ENCODE measurements at regions of chr9 and their contacts with region 1.

Region 1: GRCh38 chr9:36450110-36450732 is 50.2 kb upstream of the RNF38 start:
- DNase-seq: no peak
- H3K4me3 ChIP-seq: no peak overlapping the region
- H3K27ac ChIP-seq: no peak overlapping the region
- H3K4me1 ChIP-seq: peaks cover 0 to 8% (median 4%) of the 10 kb centered on the region in 4 experiments; a peak in 6 of 7 replicates
- H3K27me3 ChIP-seq: no peaks in the 10 kb centered on the region
- CTCF ChIP-seq: peak in 2 of 3 experiments; percentile 42 to 61; a peak in 3 of 4 replicates
- EP300 ChIP-seq: no peak
- POLR2A ChIP-seq: no peak
- RAD21 ChIP-seq: peak; percentile 62 to 72

Region 2: DNA sequence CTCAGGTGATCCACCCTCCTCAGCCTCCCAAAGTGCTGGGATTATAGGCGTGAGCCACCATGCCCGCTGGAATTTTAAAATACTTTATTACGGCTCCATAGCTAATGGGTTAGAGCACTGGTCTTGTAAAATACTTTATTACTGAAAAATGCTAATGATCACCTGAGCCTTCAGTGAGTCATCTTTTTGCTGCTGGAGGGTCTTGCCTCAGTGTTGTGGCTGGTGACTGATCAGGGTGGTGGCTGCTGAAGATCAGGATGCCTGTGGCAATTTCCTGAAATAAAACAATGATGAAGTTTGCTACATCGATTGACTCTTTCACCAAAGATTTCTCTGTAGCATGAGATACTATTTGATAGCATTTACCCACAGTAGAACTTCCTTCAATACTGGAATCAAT is 166.0 kb before region 1 on chr9:
- CTCF ChIA-PET with region 1: no interaction called
- POLR2A ChIA-PET with region 1: no interaction called
- DNase-seq: no peak
- H3K4me3 ChIP-seq: no peak overlapping the region
- H3K27ac ChIP-seq: no peak overlapping the region
- H3K4me1 ChIP-seq: no peaks in the 10 kb centered on the region
- H3K27me3 ChIP-seq: no peaks in the 10 kb centered on the region
- CTCF ChIP-seq: no peak
- EP300 ChIP-seq: no peak
- POLR2A ChIP-seq: no peak
- RAD21 ChIP-seq: no peak

Region 3: GRCh38 chr9:36415822-36416515 is 34.3 kb before region 1 on chr9:
- CTCF ChIA-PET with region 1: interaction called, 42 read pairs
- POLR2A ChIA-PET with region 1: interaction called, 4 read pairs
- DNase-seq: peak; percentile 27 to 59
- H3K4me3 ChIP-seq: peak overlapping the region in 1 of 4 experiments; percentile 23; a peak in 1 of 8 replicates
- H3K27ac ChIP-seq: no peak overlapping the region
- H3K4me1 ChIP-seq: peaks cover 0 to 9% (median 4%) of the 10 kb centered on the region in 4 experiments; a peak in 3 of 7 replicates
- H3K27me3 ChIP-seq: no peaks in the 10 kb centered on the region
- CTCF ChIP-seq: peak; percentile 12 to 42 (median 37); a peak in 3 of 4 replicates
- EP300 ChIP-seq: no peak
- POLR2A ChIP-seq: peak in 1 of 2 experiments; percentile 39; a peak in 1 of 3 replicates
- RAD21 ChIP-seq: peak; percentile 25 to 36; a peak in 3 of 4 replicates

Region 4: DNA sequence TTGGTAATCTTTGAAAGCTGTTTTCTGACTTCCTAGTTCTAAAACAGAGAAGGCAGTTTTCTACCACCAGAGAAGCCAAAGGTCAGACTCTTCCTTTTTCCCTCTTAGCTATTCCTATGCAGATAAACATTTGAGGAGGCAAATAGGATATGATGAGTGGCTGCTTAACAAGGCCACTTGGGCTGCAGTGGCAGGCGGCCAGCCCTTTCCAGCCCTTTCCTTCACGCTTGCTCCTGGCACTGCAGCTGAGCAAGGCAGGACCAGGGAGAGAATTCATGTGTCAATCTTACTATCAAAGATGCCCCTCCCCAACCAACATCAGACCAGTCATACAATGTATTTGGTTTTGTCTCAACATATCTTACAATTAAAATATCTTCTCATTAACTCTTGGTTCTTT is 13.3 kb before region 1 on chr9:
- CTCF ChIA-PET with region 1: interaction called, 84 read pairs
- POLR2A ChIA-PET with region 1: interaction called, 8 read pairs
- DNase-seq: no peak
- H3K4me3 ChIP-seq: no peak overlapping the region
- H3K27ac ChIP-seq: no peak overlapping the region
- H3K4me1 ChIP-seq: peaks cover 1 to 6% (median 4%) of the 10 kb centered on the region in 4 experiments; a peak in 3 of 7 replicates
- H3K27me3 ChIP-seq: no peaks in the 10 kb centered on the region
- CTCF ChIP-seq: no peak
- EP300 ChIP-seq: no peak
- POLR2A ChIP-seq: no peak
- RAD21 ChIP-seq: no peak

Region 5: GRCh38 chr9:36461323-36461722 is 11.1 kb after region 1 on chr9:
- CTCF ChIA-PET with region 1: interaction called, 15 read pairs
- POLR2A ChIA-PET with region 1: no interaction called
- DNase-seq: no peak
- H3K4me3 ChIP-seq: no peak overlapping the region
- H3K27ac ChIP-seq: no peak overlapping the region
- H3K4me1 ChIP-seq: no peaks in the 10 kb centered on the region
- H3K27me3 ChIP-seq: no peaks in the 10 kb centered on the region
- CTCF ChIP-seq: no peak
- EP300 ChIP-seq: no peak
- POLR2A ChIP-seq: no peak
- RAD21 ChIP-seq: no peak

Region 6: GRCh38 chr9:36479101-36479500 is 28.9 kb after region 1 on chr9:
- CTCF ChIA-PET with region 1: interaction called, 13 read pairs
- POLR2A ChIA-PET with region 1: no interaction called
- DNase-seq: no peak
- H3K4me3 ChIP-seq: no peak overlapping the region
- H3K27ac ChIP-seq: no peak overlapping the region
- H3K4me1 ChIP-seq: peaks cover 0 to 12% (median 4%) of the 10 kb centered on the region in 4 experiments; a peak in 3 of 7 replicates
- H3K27me3 ChIP-seq: no peaks in the 10 kb centered on the region
- CTCF ChIP-seq: no peak
- EP300 ChIP-seq: no peak
- POLR2A ChIP-seq: no peak
- RAD21 ChIP-seq: no peak

Region 7: GRCh38 chr9:36560857-36561221 is 110.6 kb after region 1 on chr9:
- CTCF ChIA-PET with region 1: interaction called, 18 read pairs
- POLR2A ChIA-PET with region 1: no interaction called
- DNase-seq: no peak
- H3K4me3 ChIP-seq: no peak overlapping the region
- H3K27ac ChIP-seq: no peak overlapping the region
- H3K4me1 ChIP-seq: peaks cover 2 to 5% (median 3%) of the 10 kb centered on the region in 4 experiments; a peak in 4 of 7 replicates
- H3K27me3 ChIP-seq: no peaks in the 10 kb centered on the region
- CTCF ChIP-seq: no peak
- EP300 ChIP-seq: no peak
- POLR2A ChIP-seq: no peak
- RAD21 ChIP-seq: no peak